Aorta (tissue), 5 donors: ENCODE measurements at regions of chr1 and their contacts with region 1.

Region 1: GRCh38 chr1:168082008-168082876 is 54.5 kb downstream of the GPR161 start:
- DNase-seq: peak; percentile 80 to 85
- ATAC-seq: peak; percentile 77
- H3K4me3 ChIP-seq: no peak overlapping the region
- H3K27ac ChIP-seq: no peak overlapping the region
- H3K4me1 ChIP-seq: peaks cover 0 to 1% of the 10 kb centered on the region in 2 donors
- H3K27me3 ChIP-seq: no peaks in the 10 kb centered on the region

Region 2: DNA sequence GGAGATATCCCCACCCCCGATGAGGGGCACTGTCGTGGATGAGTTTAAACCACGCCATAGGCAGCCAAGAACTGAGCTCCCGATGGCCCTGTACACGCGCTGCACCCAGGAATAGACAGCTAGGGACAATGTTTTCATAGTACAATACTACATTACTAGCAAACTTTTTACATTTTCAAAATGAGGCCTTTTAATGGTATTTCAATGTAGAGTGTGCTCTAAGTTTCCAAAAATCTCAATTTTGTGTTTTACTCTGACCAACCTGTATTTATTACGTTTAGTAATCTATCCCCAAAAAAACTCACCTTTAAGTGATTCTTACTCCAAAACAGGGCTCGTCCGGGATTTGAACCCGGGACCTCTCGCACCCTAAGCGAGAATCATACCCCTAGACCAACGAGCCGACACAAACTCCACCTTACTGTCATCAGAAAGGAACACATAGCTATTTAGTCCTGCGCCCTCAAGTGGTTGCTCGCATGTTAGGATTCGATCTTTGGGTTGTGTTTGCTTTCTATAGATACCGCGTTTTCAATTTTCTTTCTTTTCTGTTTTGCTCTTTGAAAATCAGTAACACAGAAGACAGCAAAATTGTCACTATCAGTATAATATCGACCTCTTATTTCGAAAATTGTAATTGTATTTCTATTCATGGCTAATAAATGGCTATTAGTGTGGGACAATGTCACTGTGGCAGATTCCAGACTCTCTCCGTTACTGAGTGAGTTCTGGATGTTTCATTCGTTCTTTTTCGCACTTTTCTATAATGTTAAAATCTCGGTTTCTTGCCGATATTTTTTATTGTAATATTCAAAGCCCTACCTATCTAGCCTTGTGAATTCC is 366.9 kb before region 1 on chr1:
- intact Hi-C with region 1: loop called in 1 of 2 experiments (anchors 10 kb)
- DNase-seq: peak; percentile 85 to 91
- ATAC-seq: peak; percentile 90
- H3K4me3 ChIP-seq: peak overlapping the region; percentile 59 to 92
- H3K27ac ChIP-seq: peak overlapping the region in 1 of 2 donors; percentile 55
- H3K4me1 ChIP-seq: no peaks in the 10 kb centered on the region
- H3K27me3 ChIP-seq: no peaks in the 10 kb centered on the region

Region 3: GRCh38 chr1:168136709-168137514 is 54.7 kb after region 1 on chr1 and contains the start of gene GPR161:
- intact Hi-C with region 1: loop called in 1 of 2 experiments (anchors 5 kb)
- DNase-seq: peak; percentile 71 to 87
- ATAC-seq: peak; percentile 64
- H3K4me3 ChIP-seq: peak within 1 kb of the TSS; percentile 61 to 89
- H3K27ac ChIP-seq: peak within 1 kb of the TSS; percentile 20 to 50
- H3K4me1 ChIP-seq: no peaks in the 10 kb centered on the region
- H3K27me3 ChIP-seq: no peaks in the 10 kb centered on the region
- total RNA-seq, gene GPR161: 14.4 to 19.8 TPM